ENCODE measurements at regions of chr16 and their contacts with region 1.

Region 1: DNA sequence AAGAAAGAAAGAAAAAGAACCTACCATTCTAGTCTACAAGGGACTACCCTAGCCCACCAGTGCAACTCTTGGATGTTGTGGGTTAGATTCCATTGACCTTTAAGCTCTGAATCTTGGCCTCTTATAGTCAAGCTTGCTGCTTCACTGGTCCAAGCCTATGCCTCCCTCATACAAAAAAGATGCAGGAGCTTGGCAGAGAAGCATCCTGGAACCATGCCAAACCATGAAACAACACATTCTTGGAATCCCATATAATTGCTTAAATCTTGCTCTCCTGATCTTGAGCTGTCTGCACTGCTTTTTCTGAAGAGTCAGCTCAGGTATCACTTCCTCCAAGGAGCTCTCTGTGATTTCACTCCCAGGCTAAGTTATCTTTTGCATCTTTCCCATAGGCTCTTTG is 117.9 kb upstream of the GPR139 start:
- DNase-seq: no peak
- H3K4me3 ChIP-seq: no peak overlapping the region
- H3K27ac ChIP-seq: no peak overlapping the region
- H3K4me1 ChIP-seq: no peaks in the 10 kb centered on the region
- CTCF ChIP-seq: no peak

Region 2: DNA sequence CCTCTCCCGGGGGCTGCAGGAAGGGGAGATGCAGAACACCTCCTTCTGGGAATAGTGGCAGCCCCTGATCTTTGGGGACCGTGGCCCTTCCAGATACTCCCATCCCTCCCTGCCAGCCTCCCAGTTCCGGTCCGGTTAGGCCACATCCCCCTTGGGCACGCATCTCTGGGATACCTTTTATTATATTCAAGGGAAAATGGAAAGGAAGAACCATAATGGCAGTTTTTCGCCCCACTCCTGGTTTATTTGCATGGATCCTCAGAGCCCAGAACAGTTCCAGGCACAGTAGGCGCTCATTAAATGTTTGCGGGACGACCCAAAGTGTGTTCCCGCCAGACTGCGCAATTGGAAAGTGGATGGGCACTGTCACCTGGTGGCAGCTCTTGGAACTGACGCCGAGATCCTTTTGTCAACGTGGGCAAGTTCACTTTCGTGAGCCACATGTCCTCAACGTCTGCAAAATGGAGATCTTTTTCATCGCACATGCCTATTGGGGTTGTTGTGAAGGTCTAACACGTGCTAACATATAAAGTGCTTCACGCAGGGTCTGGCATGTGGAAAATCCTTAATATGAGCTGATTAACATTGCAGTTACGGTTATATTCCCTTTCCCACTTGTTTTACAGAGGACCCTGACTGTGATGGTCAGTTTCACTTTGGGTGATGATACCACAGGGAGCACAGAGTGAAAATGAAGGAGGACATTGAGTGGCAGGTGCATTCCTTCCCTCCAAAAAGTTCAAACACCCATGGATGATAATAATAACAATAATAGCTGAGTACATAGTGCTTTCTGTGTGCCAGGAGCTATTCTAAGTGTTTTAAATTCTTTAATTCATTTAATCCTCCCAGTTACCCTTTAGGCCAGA is 305.3 kb before region 1 on chr16:
- CTCF ChIA-PET with region 1: no interaction called
- POLR2A ChIA-PET with region 1: no interaction called
- intact Hi-C with region 1: no loop called
- DNase-seq: peak; percentile 74
- H3K4me3 ChIP-seq: no peak overlapping the region
- H3K27ac ChIP-seq: no peak overlapping the region
- H3K4me1 ChIP-seq: no peaks in the 10 kb centered on the region
- CTCF ChIP-seq: peak; percentile 94

Region 3: GRCh38 chr16:20300312-20301097 is 108.9 kb after region 1 on chr16:
- CTCF ChIA-PET with region 1: no interaction called
- POLR2A ChIA-PET with region 1: no interaction called
- intact Hi-C with region 1: loop called (anchors 5 kb)
- DNase-seq: peak; percentile 52
- H3K4me3 ChIP-seq: no peak overlapping the region
- H3K27ac ChIP-seq: no peak overlapping the region
- H3K4me1 ChIP-seq: no peaks in the 10 kb centered on the region
- CTCF ChIP-seq: peak; percentile 87